ENCODE measurements at regions of chr2 and their contacts with region 1.

Region 1: GRCh38 chr2:100730346-100730745 is 89.6 kb upstream of the NPAS2 start:
- DNase-seq: peak; percentile 58 to 61
- ATAC-seq: peak; percentile 69 to 90 (median 80)
- H3K4me3 ChIP-seq: no peak overlapping the region
- H3K27ac ChIP-seq: no peak overlapping the region
- H3K4me1 ChIP-seq: peaks cover 4 to 14% (median 11%) of the 10 kb centered on the region in 9 donors
- H3K27me3 ChIP-seq: no peaks in the 10 kb centered on the region
- CTCF ChIP-seq: peak; percentile 23 to 84 (median 71)

Region 2: DNA sequence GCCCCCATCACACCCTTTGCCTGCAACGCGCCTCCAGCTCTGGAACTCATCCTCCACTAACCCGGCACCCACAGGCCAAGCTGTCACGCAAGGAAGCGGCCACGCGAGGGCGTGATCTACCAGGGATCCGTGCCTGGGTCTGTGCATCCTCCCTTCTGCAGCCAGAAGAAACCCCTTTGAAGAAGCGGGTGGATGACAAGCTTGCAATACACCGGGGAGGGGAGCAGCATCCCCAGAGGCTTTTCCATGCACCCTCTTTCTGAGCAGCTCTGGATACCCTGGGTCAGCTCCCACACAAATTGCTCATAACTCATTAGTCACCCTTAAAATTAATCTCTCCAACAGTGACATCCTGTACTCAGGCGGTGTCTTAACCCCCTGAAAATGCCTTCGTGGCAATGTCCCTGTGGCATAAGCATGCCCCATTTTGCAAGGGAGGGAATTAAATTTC is 119.9 kb before region 1 on chr2:
- intact Hi-C with region 1: loop called in 7 of 10 experiments (anchors 5 to 10 kb)
- DNase-seq: peak; percentile 59 to 66
- ATAC-seq: peak; percentile 61 to 85 (median 74)
- H3K4me3 ChIP-seq: no peak overlapping the region
- H3K27ac ChIP-seq: no peak overlapping the region
- H3K4me1 ChIP-seq: no peaks in the 10 kb centered on the region
- H3K27me3 ChIP-seq: no peaks in the 10 kb centered on the region
- CTCF ChIP-seq: peak; percentile 34 to 74 (median 65)

Region 3: DNA sequence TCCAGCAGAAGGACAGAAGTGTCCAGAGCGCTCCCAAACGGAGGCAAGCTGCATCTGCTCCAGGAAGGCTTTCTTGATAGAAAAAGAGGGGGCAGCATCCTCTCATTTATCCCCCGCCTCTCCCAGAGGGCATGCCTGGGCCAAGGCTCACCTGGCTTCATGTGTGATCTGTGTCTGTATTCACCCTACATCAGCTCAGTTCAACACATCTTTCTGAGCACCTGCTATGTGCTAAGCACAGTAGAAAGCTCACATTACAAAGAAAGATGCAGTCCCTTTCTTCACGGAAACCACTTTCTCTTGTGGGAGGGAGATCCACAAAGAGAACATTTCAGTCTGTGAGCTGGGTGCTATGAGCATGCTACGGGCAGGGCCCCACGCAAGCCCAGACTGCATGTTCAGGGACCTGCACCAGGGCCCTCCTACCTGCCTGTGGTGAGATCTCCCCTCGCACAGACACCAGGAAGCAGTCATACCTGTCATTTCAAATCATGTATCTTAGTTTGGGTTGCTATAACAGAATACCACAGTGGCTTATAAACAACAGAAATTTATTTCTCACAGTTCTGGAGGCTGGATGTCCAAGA is 76.8 kb before region 1 on chr2:
- intact Hi-C with region 1: no loop called
- DNase-seq: no peak
- ATAC-seq: no peak
- H3K4me3 ChIP-seq: no peak overlapping the region
- H3K27ac ChIP-seq: no peak overlapping the region
- H3K4me1 ChIP-seq: no peaks in the 10 kb centered on the region
- H3K27me3 ChIP-seq: peaks cover 0 to under 1% (median 0%) of the 10 kb centered on the region in 7 donors
- CTCF ChIP-seq: no peak

Region 4: DNA sequence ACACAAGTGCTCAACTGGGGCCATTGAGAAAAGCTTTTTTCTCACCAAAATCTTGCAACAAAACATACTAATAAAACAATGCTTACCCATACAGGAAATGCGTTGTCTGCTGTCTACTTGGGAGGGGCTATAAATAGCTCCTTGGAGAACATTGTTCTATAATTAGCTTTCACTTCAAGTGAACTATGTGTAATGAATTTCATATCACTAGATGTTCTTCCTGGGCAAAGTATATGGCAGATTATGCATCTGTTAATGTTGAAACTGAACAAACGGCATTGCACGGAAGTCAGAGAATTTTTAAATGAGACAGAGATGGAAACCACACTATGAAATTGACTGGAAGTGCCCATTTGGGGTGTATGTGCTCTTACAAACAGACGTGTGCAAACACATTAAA is 83.2 kb after region 1 on chr2:
- intact Hi-C with region 1: loop called in 4 of 10 experiments (anchors 5 kb)
- DNase-seq: no peak
- ATAC-seq: peak; percentile 62 to 89 (median 76)
- H3K4me3 ChIP-seq: no peak overlapping the region
- H3K27ac ChIP-seq: peak overlapping the region in 9 of 10 donors; percentile 34 to 72 (median 58)
- H3K4me1 ChIP-seq: peaks cover 2 to 56% (median 40%) of the 10 kb centered on the region in 9 donors
- H3K27me3 ChIP-seq: peaks cover 0 to 17% (median 0%) of the 10 kb centered on the region in 7 donors
- CTCF ChIP-seq: no peak

Region 5: DNA sequence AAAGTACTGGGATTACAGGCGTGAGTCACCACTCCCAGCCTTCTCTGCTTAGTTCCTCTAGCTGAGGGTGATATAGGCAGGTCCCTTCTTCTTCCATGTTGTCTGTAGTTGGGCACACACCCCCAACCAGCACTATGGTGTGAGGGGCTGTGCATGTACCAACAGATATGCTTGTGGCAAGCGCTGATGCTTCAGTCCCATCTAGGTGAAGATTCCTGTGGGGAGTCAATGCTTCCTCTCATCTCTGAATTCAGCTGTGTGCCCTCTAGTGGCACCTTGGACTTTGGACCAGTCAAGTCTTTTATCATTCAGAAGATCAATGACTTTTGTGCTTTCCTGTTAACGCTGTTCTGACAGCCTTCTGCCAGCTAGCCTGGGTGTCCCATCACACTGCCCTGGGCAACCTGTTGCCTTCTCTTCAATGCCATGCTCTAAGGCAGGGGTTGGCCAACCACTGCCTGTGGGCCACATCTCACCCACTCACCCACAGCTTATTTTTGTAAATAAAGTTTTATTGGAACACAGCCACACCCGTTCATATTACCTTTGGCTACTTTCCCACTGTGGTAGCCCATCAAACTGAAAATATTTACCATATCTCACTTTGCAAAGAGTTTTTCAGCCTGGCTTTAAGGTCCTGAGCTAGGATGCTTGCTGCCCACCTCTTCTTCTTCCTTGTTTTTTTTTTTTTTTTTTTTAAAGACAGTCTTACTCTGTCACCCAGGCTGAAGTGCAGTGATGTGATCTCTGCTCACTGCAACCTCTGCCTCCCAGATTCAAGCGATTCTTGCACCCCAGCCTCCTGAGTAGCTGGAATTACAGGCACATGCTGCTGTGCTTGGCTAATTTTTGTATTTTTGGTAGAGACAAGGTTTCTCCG is 140.5 kb after region 1 on chr2:
- intact Hi-C with region 1: loop called in 1 of 10 experiments (anchors 5 kb)
- DNase-seq: no peak
- ATAC-seq: peak in 1 of 8 donors; percentile 28
- H3K4me3 ChIP-seq: no peak overlapping the region
- H3K27ac ChIP-seq: no peak overlapping the region
- H3K4me1 ChIP-seq: peaks cover 0 to 7% (median 4%) of the 10 kb centered on the region in 9 donors
- H3K27me3 ChIP-seq: no peaks in the 10 kb centered on the region
- CTCF ChIP-seq: peak in 3 of 9 donors; percentile 15 to 29 (median 18)